IMR-90 (cell line): ENCODE measurements at regions of chr1 and their contacts with region 1.

Region 1: DNA sequence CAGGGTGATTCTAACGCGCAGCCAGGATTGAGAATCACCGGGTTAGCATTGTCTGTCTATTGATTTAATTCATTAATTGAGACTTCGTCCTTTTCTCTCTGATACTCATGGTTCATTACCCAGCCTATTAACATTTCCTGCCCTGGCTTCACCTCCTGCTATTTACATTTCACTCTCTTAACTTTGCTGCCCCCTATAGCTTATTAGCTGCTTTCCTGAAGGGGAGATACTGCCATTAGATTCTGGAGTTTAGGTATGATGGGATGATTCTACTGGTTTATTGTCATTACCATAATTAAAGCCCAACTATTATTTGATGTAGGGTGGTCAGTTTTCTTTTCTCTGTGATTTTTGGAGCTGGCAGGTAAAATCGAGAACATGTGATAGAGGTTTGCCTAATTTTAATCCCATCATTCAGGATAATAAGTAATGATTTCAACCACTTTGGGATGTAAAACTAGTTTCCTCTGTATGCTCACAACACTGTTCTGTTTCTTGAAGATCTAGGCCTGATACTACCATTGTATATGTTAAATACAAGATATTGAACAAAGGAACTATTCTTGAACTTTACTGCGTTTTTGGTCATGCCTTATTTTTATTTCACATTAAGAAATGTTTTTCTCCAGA is 6.4 kb downstream of the PPP2R5A start:
- DNase-seq: peak; percentile 44
- ATAC-seq: peak; percentile 66
- H3K4me3 ChIP-seq: no peak overlapping the region
- H3K27ac ChIP-seq: no peak overlapping the region
- H3K4me1 ChIP-seq: peaks cover 6% of the 10 kb centered on the region
- H3K27me3 ChIP-seq: no peaks in the 10 kb centered on the region
- CTCF ChIP-seq: peak; percentile 76
- POLR2A ChIP-seq: no peak
- RAD21 ChIP-seq: peak; percentile 81

Region 2: DNA sequence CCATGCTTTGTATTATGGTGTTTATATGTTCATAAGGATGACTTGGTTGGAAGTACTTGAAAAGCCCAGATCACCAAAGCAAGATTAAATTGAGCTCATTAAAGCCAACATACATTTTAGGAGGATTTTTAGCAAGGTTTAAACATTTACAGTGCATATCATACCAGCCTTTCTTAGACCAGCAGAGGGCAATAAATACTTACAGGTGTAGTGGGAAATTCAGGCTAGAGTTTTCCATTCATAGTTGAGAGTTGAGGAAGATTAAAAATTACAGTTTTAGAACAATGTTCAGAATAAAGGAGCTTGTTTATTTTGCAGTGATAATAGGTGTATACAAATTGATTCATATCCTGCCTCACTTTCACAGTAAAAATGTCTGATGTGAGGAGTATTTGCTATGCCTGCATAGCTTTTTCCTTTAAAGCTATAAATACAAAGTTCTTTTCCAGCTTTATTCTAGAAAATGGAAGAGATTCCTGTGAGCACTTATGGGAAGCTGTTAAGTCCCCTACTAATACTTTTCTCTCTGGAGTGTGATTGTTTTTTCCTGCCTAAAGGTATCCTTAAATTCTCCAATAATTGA is 220.8 kb before region 1 on chr1:
- CTCF ChIA-PET with region 1: interaction called, 28 read pairs
- POLR2A ChIA-PET with region 1: no interaction called
- dilution Hi-C with region 1: no loop called
- in situ Hi-C with region 1: loop called (anchors 5 kb)
- intact Hi-C with region 1: loop called (anchors 1 kb)
- DNase-seq: peak; percentile 70
- ATAC-seq: peak; percentile 78
- H3K4me3 ChIP-seq: no peak overlapping the region
- H3K27ac ChIP-seq: no peak overlapping the region
- H3K4me1 ChIP-seq: no peaks in the 10 kb centered on the region
- H3K27me3 ChIP-seq: no peaks in the 10 kb centered on the region
- CTCF ChIP-seq: peak; percentile 91
- POLR2A ChIP-seq: peak; percentile 33; the same call in 1 of the 2 replicates
- RAD21 ChIP-seq: peak; percentile 93

Region 3: DNA sequence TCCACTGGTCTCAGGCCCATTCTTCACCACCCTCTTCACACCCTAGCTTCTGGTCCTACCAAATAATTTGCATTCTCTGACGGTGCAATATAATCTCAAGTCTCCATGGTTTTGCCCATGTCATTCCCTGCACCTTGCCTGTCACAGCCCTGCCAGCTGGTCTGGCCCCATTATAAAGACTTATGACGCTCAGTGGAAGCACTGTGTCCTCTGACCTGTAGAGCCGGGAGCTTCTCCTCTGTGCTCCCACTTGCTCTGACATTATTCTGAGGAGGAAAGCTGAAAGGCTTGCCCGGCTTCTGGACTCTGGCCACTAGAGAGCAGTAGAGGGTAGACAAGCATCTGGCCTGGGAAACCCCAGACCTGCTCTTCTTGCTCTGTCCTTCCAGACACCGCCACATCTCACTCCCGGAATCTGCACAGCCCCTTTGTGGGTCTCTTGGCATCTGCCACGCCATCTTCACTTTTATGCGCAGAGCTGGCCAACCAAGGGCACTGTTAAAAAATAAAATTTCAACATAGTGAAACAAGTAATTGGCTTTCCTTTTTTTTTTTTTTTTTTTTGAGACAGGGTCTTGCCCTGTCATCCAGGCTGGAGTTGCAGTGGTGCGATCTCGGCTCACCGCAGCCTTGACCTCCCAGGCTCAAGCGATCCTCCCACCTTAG is 185.5 kb after region 1 on chr1:
- CTCF ChIA-PET with region 1: no interaction called
- POLR2A ChIA-PET with region 1: no interaction called
- dilution Hi-C with region 1: no loop called
- in situ Hi-C with region 1: no loop called
- intact Hi-C with region 1: no loop called
- DNase-seq: peak; percentile 86
- ATAC-seq: peak; percentile 98
- H3K4me3 ChIP-seq: no peak overlapping the region
- H3K27ac ChIP-seq: no peak overlapping the region
- H3K4me1 ChIP-seq: peaks cover 3% of the 10 kb centered on the region
- H3K27me3 ChIP-seq: peaks cover 4% of the 10 kb centered on the region; the same call in 1 of the 2 replicates
- CTCF ChIP-seq: peak; percentile 95
- POLR2A ChIP-seq: peak; percentile 56
- RAD21 ChIP-seq: peak; percentile 97